Activated CD4-positive, alpha-beta memory T cell treated with anti-CD3 and anti-CD28 coated beads for 36 hours (primary cell): ENCODE measurements at regions of chr5 and their contacts with region 1.

Region 1: DNA sequence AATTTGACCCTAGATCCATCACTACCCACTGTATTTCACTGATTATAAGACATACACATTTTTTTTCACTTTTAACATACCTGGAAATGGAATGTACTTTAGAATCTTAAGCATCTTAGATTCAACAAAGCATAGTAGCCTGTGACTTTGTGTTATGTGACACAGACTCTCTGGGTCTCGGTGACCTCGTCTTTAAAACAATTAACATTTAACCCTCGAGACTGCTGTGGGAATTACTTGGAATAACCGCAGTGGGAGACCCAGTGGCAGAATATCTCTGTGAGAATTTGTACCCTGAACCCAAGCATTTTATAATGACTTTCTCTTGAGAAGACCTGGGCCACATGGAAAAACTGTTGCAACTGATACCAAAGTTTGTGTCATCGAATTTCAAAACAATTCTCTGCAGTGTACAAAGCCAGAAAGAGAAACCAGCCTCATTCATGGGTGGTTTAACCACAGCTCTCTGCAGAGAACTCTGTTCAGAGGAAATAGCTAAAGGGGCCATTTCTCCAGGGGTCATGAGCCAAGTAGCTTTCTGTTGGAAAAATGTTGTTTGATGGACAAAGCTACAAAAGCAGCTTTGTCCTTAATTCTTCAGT is 10.0 kb upstream of the RETREG1 start:
- DNase-seq: peak; percentile 38
- H3K4me3 Mint-ChIP-seq: no peak overlapping the region
- H3K27ac Mint-ChIP-seq: peak overlapping the region; percentile 9
- H3K4me1 Mint-ChIP-seq: peaks cover 26% of the 10 kb centered on the region
- H3K27me3 Mint-ChIP-seq: no peaks in the 10 kb centered on the region

Region 2: GRCh38 chr5:16465544-16466466 is 161.0 kb before region 1 on chr5 and contains the start of gene ZNF622:
- CTCF ChIA-PET with region 1: no interaction called
- POLR2A ChIA-PET with region 1: no interaction called
- intact Hi-C with region 1: loop called (anchors 1 kb)
- DNase-seq: peak; percentile 92
- H3K4me3 Mint-ChIP-seq: peak within 1 kb of the TSS; percentile 98
- H3K27ac Mint-ChIP-seq: peak within 1 kb of the TSS; percentile 96
- H3K4me1 Mint-ChIP-seq: peaks cover 74% of the 10 kb centered on the region
- H3K27me3 Mint-ChIP-seq: no peaks in the 10 kb centered on the region
- total RNA-seq, gene ZNF622: 35.6 to 35.9 TPM

Region 3: GRCh38 chr5:16616536-16617273 is 10.1 kb before region 1 on chr5 and contains the start of gene RETREG1:
- CTCF ChIA-PET with region 1: interaction called, 3 read pairs
- POLR2A ChIA-PET with region 1: interaction called, 11 read pairs
- intact Hi-C with region 1: loop called (anchors 1 kb)
- DNase-seq: peak; percentile 81
- H3K4me3 Mint-ChIP-seq: peak within 1 kb of the TSS; percentile 95
- H3K27ac Mint-ChIP-seq: peak within 1 kb of the TSS; percentile 83
- H3K4me1 Mint-ChIP-seq: peaks cover 33% of the 10 kb centered on the region
- H3K27me3 Mint-ChIP-seq: no peaks in the 10 kb centered on the region
- total RNA-seq, gene RETREG1: 8.1 to 10.1 TPM

Region 4: DNA sequence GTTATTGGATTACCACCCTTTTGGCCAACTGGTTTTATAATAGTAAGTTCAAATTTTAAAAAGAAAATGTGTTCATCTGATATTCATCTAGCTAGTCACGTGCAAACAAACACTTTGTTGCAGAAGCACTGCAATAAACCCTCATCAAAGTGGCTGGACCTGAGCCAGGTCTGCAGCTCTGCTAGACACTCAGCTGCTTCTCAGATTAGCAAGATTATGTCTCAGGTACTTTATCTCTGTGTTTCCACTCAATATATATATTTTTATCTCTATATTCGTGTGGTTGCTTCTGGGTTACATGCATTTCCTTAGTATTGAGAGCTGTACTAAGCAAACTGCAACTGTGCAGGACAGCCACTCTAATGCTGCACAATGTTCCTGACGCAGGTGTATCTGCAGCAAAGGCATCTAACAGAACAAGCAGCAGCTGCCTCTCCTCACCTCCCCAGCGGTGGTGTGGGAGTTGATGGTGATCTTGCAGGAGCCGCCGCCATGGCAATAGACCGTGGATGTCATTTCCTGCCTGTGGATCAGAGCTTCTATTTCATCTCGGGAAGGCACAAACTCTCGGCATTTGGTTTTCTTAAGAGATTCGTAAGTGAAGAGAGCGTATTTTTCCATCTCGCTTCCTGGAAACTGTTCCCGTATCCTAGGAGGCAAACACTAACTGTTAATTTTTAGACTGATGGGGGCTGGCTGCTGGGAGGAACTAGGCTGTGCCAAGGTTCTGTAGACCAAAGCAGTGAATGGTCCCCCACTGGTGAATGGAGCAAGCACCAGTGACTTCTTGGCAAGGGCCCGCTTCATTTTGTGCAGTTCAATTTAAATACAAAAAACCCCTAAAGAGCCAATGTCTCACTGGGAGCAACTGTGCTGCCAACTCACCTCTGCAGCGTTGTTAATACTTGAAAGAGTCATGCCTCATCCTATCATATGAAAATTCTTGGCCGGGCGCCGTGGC is 46.8 kb after region 1 on chr5:
- CTCF ChIA-PET with region 1: no interaction called
- POLR2A ChIA-PET with region 1: no interaction called
- intact Hi-C with region 1: loop called (anchors 5 kb)
- DNase-seq: peak; percentile 41
- H3K4me3 Mint-ChIP-seq: peak overlapping the region; percentile 30
- H3K27ac Mint-ChIP-seq: no peak overlapping the region
- H3K4me1 Mint-ChIP-seq: peaks cover 12% of the 10 kb centered on the region
- H3K27me3 Mint-ChIP-seq: peaks cover 2% of the 10 kb centered on the region

Region 5: DNA sequence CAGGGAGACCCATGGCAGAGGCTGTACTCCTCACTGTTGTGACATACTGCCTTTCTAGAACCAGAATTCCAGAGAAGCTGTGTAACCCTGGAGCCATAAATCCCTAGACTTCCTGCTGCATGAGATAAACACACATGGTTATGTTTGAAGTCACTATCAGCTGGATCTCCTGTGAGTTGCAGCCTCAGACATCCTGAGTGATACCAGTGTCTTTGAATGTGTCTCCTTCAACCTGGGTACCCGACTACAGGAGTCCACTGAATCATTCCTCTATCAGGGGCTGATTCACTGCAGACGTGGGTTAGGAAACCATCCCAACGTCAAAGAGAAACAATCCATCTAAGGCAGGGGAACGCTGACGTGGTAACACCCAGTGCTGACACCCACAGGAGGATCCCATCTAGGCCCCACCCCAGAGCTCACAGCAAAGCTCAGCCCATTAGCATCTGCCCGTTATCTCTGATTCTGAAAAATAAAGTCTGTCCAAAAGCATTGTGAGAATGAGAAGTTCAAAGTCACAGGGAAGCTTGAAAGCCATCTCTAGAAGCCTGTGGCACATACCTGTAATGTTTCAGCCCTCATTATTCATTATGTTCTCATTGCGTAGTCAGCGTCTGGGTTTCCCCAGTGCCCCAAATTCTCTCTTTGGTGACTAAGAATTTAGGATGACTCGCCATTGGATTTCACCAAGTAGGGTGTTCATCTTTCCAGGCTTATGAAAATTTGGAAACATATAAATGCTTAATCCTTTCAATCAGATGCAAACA is 554.4 kb after region 1 on chr5:
- CTCF ChIA-PET with region 1: no interaction called
- POLR2A ChIA-PET with region 1: no interaction called
- intact Hi-C with region 1: loop called (anchors 5 kb)
- DNase-seq: peak; percentile 31
- H3K4me3 Mint-ChIP-seq: no peak overlapping the region
- H3K27ac Mint-ChIP-seq: peak overlapping the region; percentile 44
- H3K4me1 Mint-ChIP-seq: peaks cover 2% of the 10 kb centered on the region
- H3K27me3 Mint-ChIP-seq: peaks cover 3% of the 10 kb centered on the region